ENCODE measurements at regions of chr11 and their contacts with region 1.

Region 1: DNA sequence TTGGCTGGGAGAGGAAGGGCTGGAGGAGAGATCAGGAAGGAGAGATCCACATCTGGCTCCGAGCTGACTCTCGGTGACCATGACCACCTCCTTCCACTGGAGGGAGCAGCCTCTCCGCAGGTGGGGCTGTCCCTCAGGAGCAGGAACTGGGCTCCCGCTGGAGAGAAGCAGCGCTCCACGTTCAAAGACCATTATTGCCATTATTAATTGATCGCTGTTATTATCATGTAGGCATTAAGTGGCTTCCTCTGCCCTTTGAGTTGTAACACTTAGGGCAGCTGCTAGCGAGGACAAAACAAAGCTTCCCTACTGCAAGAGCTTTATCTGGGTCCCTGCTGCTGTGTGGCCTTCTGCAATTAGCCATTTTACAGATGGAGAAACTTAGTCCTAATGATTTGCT is 251.9 kb downstream of the ST3GAL4 start:
- DNase-seq: peak; percentile 33
- H3K4me3 ChIP-seq: no peak overlapping the region
- CTCF ChIP-seq: peak; percentile 83

Region 2: DNA sequence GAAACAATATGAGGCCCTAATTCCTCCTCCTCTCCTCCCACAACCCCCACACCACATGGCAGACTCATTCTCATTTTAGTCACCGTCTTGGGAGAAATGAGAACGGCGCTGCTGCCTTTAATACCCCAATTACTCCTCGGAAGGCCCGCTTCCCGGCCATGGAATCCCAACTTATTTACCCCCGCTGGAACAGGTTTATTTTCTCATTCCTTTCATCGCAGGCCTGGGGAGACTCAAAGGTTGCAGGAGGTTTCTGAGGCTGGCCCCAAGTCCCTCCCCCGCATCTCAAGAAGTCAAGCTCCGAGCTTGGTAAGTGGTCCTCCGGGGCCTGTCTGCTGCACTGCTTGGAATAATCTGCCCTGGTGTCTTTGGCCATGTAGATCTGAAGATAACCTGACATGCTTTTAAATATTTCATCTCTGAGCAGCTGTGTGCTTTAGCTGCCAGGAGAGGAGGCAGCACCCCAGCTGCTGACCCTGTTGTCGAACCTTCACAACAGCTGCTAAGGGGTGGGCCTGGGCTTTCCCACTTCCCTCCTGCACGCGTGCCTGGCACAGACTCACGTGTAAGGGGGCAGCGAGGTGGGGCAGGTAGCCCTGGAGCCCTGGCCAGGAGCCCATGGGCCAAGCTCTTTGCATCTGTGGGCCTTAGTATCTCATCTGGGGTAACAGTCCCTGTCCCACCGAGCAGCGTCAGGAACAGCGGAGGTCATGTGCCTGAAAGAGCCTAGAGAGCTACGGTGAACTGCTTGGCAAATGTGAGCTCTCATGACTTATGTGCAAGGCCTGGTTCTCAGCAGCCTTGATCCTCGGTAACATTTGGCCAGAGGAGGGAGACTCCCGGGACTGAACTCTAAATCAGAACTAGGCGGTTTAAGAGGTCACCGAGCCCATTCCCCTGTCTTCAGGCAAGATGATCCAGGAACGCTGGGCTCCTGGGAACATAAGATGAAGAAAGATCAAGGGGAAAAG is 87.3 kb before region 1 on chr11:
- in situ Hi-C with region 1: no loop called
- DNase-seq: no peak
- H3K4me3 ChIP-seq: no peak overlapping the region
- CTCF ChIP-seq: no peak

Region 3: DNA sequence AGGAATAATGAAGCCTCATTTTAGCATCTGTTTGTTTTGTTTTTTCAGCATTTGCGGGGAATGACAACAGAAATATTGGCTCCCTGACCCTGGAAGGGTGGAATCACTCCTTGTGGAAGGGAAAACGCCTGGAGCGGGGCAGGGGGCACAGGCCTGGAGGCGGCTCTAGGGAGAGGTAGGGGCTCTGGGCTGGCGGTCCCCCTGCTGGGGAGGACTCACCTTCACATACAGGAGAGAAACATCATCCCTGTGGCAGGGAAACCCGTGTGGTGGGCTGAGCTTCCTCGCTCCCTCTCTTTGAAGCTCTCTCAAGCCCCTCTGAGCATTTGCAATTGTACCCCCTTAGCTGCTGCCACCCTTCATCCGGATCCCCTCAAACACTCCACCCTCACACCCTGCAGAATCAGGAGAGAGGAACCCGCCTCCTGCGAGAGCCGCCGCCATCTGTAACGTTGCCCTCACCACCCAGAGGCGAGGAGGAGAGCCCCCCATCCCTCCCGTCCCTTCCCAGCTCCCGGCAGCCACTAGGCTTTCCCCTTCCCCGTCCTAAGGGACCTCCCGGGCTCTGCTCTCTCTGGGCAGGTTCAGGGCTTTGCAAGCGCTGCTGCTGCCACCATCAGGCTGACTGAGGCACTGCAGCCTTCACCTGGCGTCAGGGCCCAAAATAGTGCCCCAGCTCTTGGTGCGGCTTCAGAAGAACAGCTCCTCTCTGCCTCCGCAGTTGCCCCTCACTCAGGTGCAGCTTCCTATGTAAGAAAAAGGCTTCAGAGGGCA is 382.8 kb after region 1 on chr11:
- in situ Hi-C with region 1: loop called (anchors 25 kb)
- DNase-seq: peak; percentile 49
- H3K4me3 ChIP-seq: no peak overlapping the region
- CTCF ChIP-seq: peak; percentile 98

Measured in astrocyte of the cerebellum (primary cell).